Heart left ventricle (tissue), 16 donors: ENCODE measurements at regions of chr4 and their contacts with region 1.

Region 1: GRCh38 chr4:74531963-74532794 is 87.2 kb downstream of the AREG start:
- DNase-seq: no peak
- ATAC-seq: peak; percentile 68 to 83 (median 76)
- H3K4me3 ChIP-seq: no peak overlapping the region
- H3K27ac ChIP-seq: no peak overlapping the region
- H3K4me1 ChIP-seq: peaks cover 0 to 10% (median 5%) of the 10 kb centered on the region in 12 donors
- H3K27me3 ChIP-seq: no peaks in the 10 kb centered on the region
- CTCF ChIP-seq: peak in 10 of 12 donors; percentile 39 to 67 (median 60)
- POLR2A ChIP-seq: no peak

Region 2: DNA sequence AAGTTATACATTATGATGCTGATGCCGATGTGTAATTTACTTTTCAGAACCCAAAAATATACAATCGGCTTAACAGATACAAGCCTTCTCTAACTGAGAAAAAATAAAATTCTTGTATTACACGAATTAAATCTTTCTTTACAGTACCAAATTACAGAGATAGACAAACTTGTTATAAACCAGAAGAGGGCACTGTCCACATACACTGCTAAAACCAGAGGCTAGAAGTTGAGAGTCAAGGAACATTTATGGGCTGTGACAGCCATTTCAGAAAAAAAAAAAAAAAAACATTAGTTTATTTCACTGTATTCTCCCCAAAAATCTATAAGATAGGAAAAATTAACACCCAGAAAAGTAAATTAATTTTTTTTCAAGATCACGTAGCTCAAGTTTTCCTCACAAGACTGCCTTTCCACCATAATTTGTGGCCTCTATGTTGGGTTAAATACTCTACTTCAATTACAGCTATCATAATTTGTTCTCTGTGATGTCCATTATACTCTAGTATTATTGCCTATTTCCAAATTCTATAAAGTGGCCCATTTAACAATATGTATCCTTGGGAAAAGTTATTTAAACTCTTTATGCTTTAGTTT is 155.2 kb before region 1 on chr4:
- intact Hi-C with region 1: loop called (anchors 1 to 5 kb)
- DNase-seq: no peak
- ATAC-seq: peak; percentile 63 to 73 (median 70)
- H3K4me3 ChIP-seq: no peak overlapping the region
- H3K27ac ChIP-seq: no peak overlapping the region
- H3K4me1 ChIP-seq: no peaks in the 10 kb centered on the region
- H3K27me3 ChIP-seq: no peaks in the 10 kb centered on the region
- CTCF ChIP-seq: peak; percentile 40 to 74 (median 62)
- POLR2A ChIP-seq: no peak

Region 3: GRCh38 chr4:74613266-74613665 is 81.1 kb after region 1 on chr4:
- intact Hi-C with region 1: loop called in 1 of 10 experiments (anchors 5 kb)
- DNase-seq: no peak
- ATAC-seq: no peak
- H3K4me3 ChIP-seq: no peak overlapping the region
- H3K27ac ChIP-seq: no peak overlapping the region
- H3K4me1 ChIP-seq: peaks cover 0 to 5% (median 0%) of the 10 kb centered on the region in 12 donors
- H3K27me3 ChIP-seq: no peaks in the 10 kb centered on the region
- CTCF ChIP-seq: no peak
- POLR2A ChIP-seq: no peak

Region 4: DNA sequence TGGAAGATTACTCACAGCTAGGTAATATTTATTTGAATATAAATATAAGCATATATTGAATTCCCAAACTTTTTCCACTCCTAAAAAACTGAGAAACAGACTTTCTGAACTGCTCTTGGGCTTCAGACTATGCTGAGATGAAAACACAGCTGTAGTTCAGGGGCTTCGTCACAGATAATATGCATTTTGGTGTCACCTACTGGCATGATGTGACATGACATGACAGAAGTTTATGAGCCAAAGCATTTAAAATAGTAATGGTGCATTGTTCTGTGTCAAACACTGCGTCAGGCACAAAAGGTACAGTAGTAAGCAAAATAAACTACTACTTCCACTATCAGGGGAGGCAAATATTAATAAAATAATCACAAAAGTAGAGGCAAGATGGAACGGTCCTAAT is 90.9 kb after region 1 on chr4:
- intact Hi-C with region 1: loop called in 2 of 10 experiments (anchors 5 to 10 kb)
- DNase-seq: no peak
- ATAC-seq: peak in 3 of 4 donors; percentile 49 to 64 (median 52)
- H3K4me3 ChIP-seq: no peak overlapping the region
- H3K27ac ChIP-seq: no peak overlapping the region
- H3K4me1 ChIP-seq: peaks cover 0 to 23% (median 4%) of the 10 kb centered on the region in 12 donors
- H3K27me3 ChIP-seq: no peaks in the 10 kb centered on the region
- CTCF ChIP-seq: peak in 11 of 12 donors; percentile 27 to 54 (median 46)
- POLR2A ChIP-seq: no peak